ENCODE measurements at regions of chr17 and their contacts with region 1.

Region 1: DNA sequence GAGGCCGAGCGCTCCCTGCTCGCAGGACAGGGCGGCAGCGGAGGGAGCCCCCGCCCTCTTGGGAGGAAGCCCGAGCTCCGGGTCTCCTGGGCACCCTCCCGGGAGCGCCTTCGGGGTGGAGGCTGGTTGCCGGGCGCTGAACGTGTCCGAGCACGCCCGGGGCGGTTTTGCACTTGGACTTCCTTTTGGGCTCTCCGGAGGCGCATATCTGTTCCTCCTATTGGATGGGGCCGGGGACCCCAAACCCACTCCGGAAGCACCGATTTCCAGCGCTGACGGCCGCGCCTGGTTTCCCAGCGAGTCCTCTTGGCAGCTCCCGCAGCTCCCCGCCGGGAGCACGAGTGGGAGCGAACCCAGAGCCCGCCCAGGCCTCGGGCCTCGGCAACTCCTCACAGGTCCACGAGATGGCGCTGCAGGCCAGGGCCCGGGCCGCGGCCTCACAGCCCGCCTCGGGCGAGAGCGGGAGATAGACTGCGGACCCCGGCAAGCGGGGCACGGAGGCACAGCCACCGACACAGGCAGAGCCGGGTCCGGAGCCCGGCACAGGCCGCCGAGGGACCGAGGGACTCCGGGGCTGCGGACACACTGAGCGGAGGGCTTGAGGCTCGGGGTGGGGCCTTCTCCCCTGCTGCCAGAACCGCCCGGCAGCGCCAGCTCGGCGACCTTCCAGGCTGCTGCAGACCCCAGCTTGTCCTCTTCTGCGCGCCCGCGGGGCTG is 12.7 kb downstream of the TBX2 start:
- DNase-seq: peak; percentile 89
- ATAC-seq: peak; percentile 79
- H3K4me3 ChIP-seq: peak overlapping the region; percentile 30 to 69 (median 62)
- H3K4me3 Mint-ChIP-seq: peak overlapping the region; percentile 86
- H3K27ac ChIP-seq: no peak overlapping the region
- H3K27ac Mint-ChIP-seq: peak overlapping the region; percentile 41
- H3K4me1 ChIP-seq: peaks cover 51 to 57% of the 10 kb centered on the region in 2 donors
- H3K4me1 Mint-ChIP-seq: peaks cover 38% of the 10 kb centered on the region
- H3K27me3 ChIP-seq: peaks cover 0 to 69% (median 42%) of the 10 kb centered on the region in 4 experiments
- H3K27me3 Mint-ChIP-seq: peaks cover 35% of the 10 kb centered on the region
- CTCF ChIP-seq: peak; percentile 98

Region 2: GRCh38 chr17:60720763-60721531 is 691.4 kb before region 1 on chr17:
- CTCF ChIA-PET with region 1: interaction called, 6 read pairs
- POLR2A ChIA-PET with region 1: no interaction called
- intact Hi-C with region 1: loop called (anchors 5 kb)
- DNase-seq: peak; percentile 68
- ATAC-seq: peak; percentile 44
- H3K4me3 ChIP-seq: no peak overlapping the region
- H3K4me3 Mint-ChIP-seq: no peak overlapping the region
- H3K27ac ChIP-seq: no peak overlapping the region
- H3K27ac Mint-ChIP-seq: no peak overlapping the region
- H3K4me1 ChIP-seq: peaks cover 3 to 11% of the 10 kb centered on the region in 2 donors
- H3K4me1 Mint-ChIP-seq: peaks cover 13% of the 10 kb centered on the region
- H3K27me3 ChIP-seq: no peaks in the 10 kb centered on the region
- H3K27me3 Mint-ChIP-seq: no peaks in the 10 kb centered on the region
- CTCF ChIP-seq: peak; percentile 95

Region 3: GRCh38 chr17:61551255-61551742 is 139.0 kb after region 1 on chr17:
- CTCF ChIA-PET with region 1: no interaction called
- POLR2A ChIA-PET with region 1: no interaction called
- intact Hi-C with region 1: loop called (anchors 2 kb)
- DNase-seq: peak; percentile 10
- ATAC-seq: no peak
- H3K4me3 ChIP-seq: no peak overlapping the region
- H3K4me3 Mint-ChIP-seq: no peak overlapping the region
- H3K27ac ChIP-seq: no peak overlapping the region
- H3K27ac Mint-ChIP-seq: no peak overlapping the region
- H3K4me1 ChIP-seq: no peaks in the 10 kb centered on the region
- H3K4me1 Mint-ChIP-seq: no peaks in the 10 kb centered on the region
- H3K27me3 ChIP-seq: peaks cover 0 to 11% (median 4%) of the 10 kb centered on the region in 4 experiments
- H3K27me3 Mint-ChIP-seq: peaks cover 43% of the 10 kb centered on the region
- CTCF ChIP-seq: peak; percentile 40

Region 4: GRCh38 chr17:61635913-61636432 is 223.7 kb after region 1 on chr17:
- CTCF ChIA-PET with region 1: interaction called, 3 read pairs
- POLR2A ChIA-PET with region 1: no interaction called
- intact Hi-C with region 1: loop called (anchors 5 kb)
- DNase-seq: peak; percentile 68
- ATAC-seq: no peak
- H3K4me3 ChIP-seq: no peak overlapping the region
- H3K4me3 Mint-ChIP-seq: no peak overlapping the region
- H3K27ac ChIP-seq: no peak overlapping the region
- H3K27ac Mint-ChIP-seq: no peak overlapping the region
- H3K4me1 ChIP-seq: peaks cover 0 to 3% of the 10 kb centered on the region in 2 donors
- H3K4me1 Mint-ChIP-seq: peaks cover 6% of the 10 kb centered on the region
- H3K27me3 ChIP-seq: peaks cover 0 to 10% (median 0%) of the 10 kb centered on the region in 4 experiments
- H3K27me3 Mint-ChIP-seq: peaks cover 45% of the 10 kb centered on the region
- CTCF ChIP-seq: peak; percentile 86

Region 5: GRCh38 chr17:61837175-61838051 is 425.1 kb after region 1 on chr17:
- CTCF ChIA-PET with region 1: interaction called, 30 read pairs
- POLR2A ChIA-PET with region 1: no interaction called
- intact Hi-C with region 1: loop called (anchors 1 kb)
- DNase-seq: peak; percentile 74
- ATAC-seq: peak; percentile 62
- H3K4me3 ChIP-seq: no peak overlapping the region
- H3K4me3 Mint-ChIP-seq: no peak overlapping the region
- H3K27ac ChIP-seq: no peak overlapping the region
- H3K27ac Mint-ChIP-seq: no peak overlapping the region
- H3K4me1 ChIP-seq: peaks cover 5 to 6% of the 10 kb centered on the region in 2 donors
- H3K4me1 Mint-ChIP-seq: peaks cover 9% of the 10 kb centered on the region
- H3K27me3 ChIP-seq: no peaks in the 10 kb centered on the region
- H3K27me3 Mint-ChIP-seq: no peaks in the 10 kb centered on the region
- CTCF ChIP-seq: peak; percentile 97

Region 6: GRCh38 chr17:62119373-62119772 is 707.1 kb after region 1 on chr17:
- CTCF ChIA-PET with region 1: interaction called, 4 read pairs
- POLR2A ChIA-PET with region 1: no interaction called
- intact Hi-C with region 1: loop called (anchors 10 kb)
- DNase-seq: no peak
- ATAC-seq: no peak
- H3K4me3 ChIP-seq: no peak overlapping the region
- H3K4me3 Mint-ChIP-seq: no peak overlapping the region
- H3K27ac ChIP-seq: no peak overlapping the region
- H3K27ac Mint-ChIP-seq: no peak overlapping the region
- H3K4me1 ChIP-seq: no peaks in the 10 kb centered on the region
- H3K4me1 Mint-ChIP-seq: peaks cover 5% of the 10 kb centered on the region
- H3K27me3 ChIP-seq: peaks cover 0 to 3% (median 0%) of the 10 kb centered on the region in 4 experiments
- H3K27me3 Mint-ChIP-seq: peaks cover 8% of the 10 kb centered on the region
- CTCF ChIP-seq: no peak

Measured in B cell (primary cell).